HCT116 (cell line): ENCODE measurements at regions of chr2 and their contacts with region 1.

Region 1: DNA sequence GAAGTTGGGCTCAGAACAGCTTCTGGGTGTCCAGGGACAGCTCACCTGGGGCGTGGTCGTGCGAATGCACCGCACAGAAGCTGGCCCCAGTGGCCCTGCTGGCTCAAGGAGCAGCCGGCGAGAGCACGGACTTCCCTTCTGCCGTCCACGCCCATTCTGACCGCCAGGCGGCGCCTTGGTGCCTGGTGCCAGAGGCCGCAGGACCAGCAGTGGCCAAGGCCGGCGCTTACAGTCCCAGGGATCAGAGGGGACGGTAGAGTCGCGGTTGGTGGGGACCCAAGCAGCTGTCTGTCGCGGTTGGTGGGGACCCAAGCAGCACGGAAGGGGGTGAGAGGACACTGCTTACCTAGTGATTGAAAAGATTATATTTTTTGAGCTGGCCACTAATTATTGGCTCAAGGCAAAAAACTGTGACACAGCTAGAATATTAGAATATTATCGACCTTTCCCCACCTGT is 25.7 kb downstream of the NPPC start:
- DNase-seq: peak; percentile 83
- ATAC-seq: peak; percentile 98
- H3K4me3 ChIP-seq: peak overlapping the region; percentile 31 to 37
- H3K27ac ChIP-seq: no peak overlapping the region
- H3K4me1 ChIP-seq: peaks cover 7 to 19% of the 10 kb centered on the region in 2 experiments; a peak in 3 of 4 replicates
- H3K27me3 ChIP-seq: no peaks in the 10 kb centered on the region
- CTCF ChIP-seq: peak; percentile 92 to 96 (median 94)
- POLR2A ChIP-seq: no peak
- RAD21 ChIP-seq: peak; percentile 79

Region 2: DNA sequence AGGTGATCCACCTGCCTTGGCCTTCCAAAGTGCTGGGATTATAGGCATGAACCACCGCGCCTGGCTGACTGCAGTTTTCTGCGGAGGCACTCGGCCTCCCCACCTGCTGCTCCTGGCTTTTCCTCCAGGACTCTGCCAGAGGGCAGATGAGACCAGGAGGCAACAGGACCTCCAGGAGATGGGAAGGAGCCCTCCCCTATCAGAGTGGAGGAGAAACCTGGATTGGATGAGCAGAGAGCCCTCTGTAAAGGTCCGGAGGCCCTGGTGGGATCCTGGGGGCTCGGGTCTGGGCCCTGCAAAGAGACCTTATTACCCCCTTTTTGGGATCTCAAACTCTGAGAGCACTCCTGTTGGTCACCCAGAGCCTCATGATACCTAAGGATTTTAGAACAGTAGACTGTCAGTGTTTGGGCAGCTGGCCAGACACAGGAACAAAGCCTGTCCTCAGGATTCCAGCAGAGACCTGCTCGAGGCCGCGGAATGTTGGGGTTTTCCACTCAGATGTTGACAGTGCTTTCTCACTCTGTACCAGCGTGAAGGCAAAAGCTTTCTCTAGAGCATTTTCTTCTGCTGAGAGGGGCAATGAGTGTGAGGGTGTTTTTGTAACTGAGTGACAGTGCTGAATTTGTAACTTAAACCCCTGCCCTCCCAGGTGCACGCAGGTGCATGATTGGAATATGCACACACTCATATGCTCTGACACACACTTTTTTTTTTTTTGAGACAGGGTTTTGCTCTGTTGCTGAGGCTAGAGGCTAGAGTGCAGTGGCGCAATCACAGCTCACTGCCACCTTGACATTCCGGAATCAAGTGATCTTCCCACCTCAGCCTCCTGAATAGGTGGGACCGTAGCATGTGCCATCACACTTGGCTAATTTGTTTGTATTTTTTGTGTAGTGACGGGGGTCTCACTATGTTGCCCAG is 22.7 kb before region 1 on chr2:
- CTCF ChIA-PET with region 1: interaction called, 13 read pairs
- POLR2A ChIA-PET with region 1: no interaction called
- RAD21 ChIA-PET with region 1: no interaction called
- intact Hi-C with region 1: no loop called
- DNase-seq: no peak
- ATAC-seq: no peak
- H3K4me3 ChIP-seq: no peak overlapping the region
- H3K27ac ChIP-seq: no peak overlapping the region
- H3K4me1 ChIP-seq: no peaks in the 10 kb centered on the region
- H3K27me3 ChIP-seq: no peaks in the 10 kb centered on the region
- CTCF ChIP-seq: no peak
- POLR2A ChIP-seq: no peak
- RAD21 ChIP-seq: no peak

Region 3: GRCh38 chr2:231910771-231911170 is 10.3 kb after region 1 on chr2:
- CTCF ChIA-PET with region 1: interaction called, 13 read pairs
- POLR2A ChIA-PET with region 1: interaction called, 3 read pairs
- RAD21 ChIA-PET with region 1: interaction called in 1 of 2 experiments, 3 read pairs
- intact Hi-C with region 1: no loop called
- DNase-seq: no peak
- ATAC-seq: no peak
- H3K4me3 ChIP-seq: no peak overlapping the region
- H3K27ac ChIP-seq: no peak overlapping the region
- H3K4me1 ChIP-seq: peaks cover 0 to 5% of the 10 kb centered on the region in 2 experiments; a peak in 1 of 4 replicates
- H3K27me3 ChIP-seq: no peaks in the 10 kb centered on the region
- CTCF ChIP-seq: no peak
- POLR2A ChIP-seq: no peak
- RAD21 ChIP-seq: no peak

Region 4: GRCh38 chr2:232327105-232328041 is 426.9 kb after region 1 on chr2:
- CTCF ChIA-PET with region 1: interaction called, 39 read pairs
- POLR2A ChIA-PET with region 1: no interaction called
- RAD21 ChIA-PET with region 1: interaction called in 1 of 2 experiments, 3 read pairs
- intact Hi-C with region 1: no loop called
- DNase-seq: peak; percentile 27
- ATAC-seq: peak; percentile 84
- H3K4me3 ChIP-seq: no peak overlapping the region
- H3K27ac ChIP-seq: no peak overlapping the region
- H3K4me1 ChIP-seq: no peaks in the 10 kb centered on the region
- H3K27me3 ChIP-seq: no peaks in the 10 kb centered on the region
- CTCF ChIP-seq: peak; percentile 75 to 85 (median 77)
- POLR2A ChIP-seq: no peak
- RAD21 ChIP-seq: peak; percentile 74